Natural killer cell (primary cell): ENCODE measurements at regions of chr7 and their contacts with region 1.

Region 1: DNA sequence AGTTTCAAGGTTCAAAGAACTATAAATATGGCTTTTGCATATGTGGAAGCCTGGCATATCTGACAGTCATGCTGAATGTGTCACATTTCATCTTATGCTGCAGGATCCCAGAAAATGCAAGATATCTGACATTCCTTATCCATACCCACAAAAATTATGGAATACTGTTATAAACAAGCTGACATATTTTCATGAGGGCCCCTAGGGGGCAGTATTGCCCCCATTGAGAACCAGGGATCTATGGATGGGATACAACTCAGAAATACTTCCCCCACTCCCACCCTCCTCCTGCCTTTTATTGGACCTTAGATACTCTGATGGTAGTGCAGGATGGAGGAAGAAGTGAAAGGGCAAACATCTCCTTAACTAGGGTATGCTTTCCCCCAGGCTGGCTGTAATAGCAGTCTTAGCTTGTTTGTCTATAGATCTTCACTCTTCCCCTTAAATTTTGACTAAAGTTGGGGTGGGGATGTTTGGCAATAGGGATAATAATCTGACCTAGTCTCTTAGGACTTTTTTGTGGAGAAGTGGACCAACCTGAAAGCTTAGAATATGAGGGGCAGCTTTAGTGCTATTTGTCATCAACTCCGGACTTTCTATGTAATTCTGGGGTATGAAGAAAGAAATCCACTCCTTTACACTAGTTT is 3.5 kb upstream of the GNGT1 start:
- DNase-seq: peak in 1 of 2 donors; percentile 24
- ATAC-seq: peak in 1 of 3 donors; percentile 50
- H3K4me3 ChIP-seq: no peak overlapping the region
- H3K4me3 Mint-ChIP-seq: no peak overlapping the region
- H3K27ac ChIP-seq: no peak overlapping the region
- H3K27ac Mint-ChIP-seq: no peak overlapping the region
- H3K4me1 ChIP-seq: no peaks in the 10 kb centered on the region
- H3K4me1 Mint-ChIP-seq: no peaks in the 10 kb centered on the region
- H3K27me3 ChIP-seq: no peaks in the 10 kb centered on the region
- H3K27me3 Mint-ChIP-seq: peaks cover 19 to 64% of the 10 kb centered on the region in 2 donors
- CTCF ChIP-seq: peak; percentile 75

Region 2: DNA sequence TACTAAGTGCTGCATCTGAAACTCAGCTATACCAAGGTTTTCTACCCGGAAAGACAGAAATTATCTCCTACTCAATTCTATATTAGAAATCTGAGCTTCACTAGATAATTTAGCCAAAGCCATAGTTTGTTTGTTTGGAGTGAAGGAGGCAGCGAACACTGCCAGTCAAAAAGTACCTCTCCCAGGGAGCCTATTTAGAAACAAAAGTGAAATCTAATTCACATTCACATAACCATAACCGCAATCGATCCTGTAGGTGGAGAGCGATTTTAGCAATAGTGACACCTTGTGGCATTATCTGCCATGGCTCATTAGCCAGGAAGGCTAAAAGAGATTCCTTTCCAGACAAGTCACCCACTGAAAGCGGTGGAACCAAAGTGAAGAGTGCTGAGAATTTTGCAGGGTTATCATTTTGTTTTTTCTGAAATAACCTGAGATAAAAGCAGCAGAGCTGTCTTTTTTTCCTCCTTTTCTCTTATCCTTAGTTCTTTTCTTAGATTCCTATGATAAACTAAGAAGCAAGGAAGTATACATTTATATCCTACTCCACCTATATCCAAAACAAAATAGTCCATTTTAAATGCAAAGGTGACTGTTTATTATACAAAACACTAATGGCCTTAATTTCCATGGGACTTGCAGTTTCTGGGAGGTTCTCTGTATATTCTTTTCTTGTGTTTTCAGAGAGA is 184.9 kb after region 1 on chr7:
- intact Hi-C with region 1: loop called (anchors 1 kb)
- DNase-seq: peak in 1 of 2 donors; percentile 76
- ATAC-seq: peak; percentile 64 to 96 (median 82)
- H3K4me3 ChIP-seq: no peak overlapping the region
- H3K4me3 Mint-ChIP-seq: peak overlapping the region; percentile 53
- H3K27ac ChIP-seq: no peak overlapping the region
- H3K27ac Mint-ChIP-seq: no peak overlapping the region
- H3K4me1 ChIP-seq: no peaks in the 10 kb centered on the region
- H3K4me1 Mint-ChIP-seq: peaks cover 6 to 10% of the 10 kb centered on the region in 2 donors
- H3K27me3 ChIP-seq: no peaks in the 10 kb centered on the region
- H3K27me3 Mint-ChIP-seq: peaks cover 43 to 69% of the 10 kb centered on the region in 2 donors
- CTCF ChIP-seq: peak; percentile 72

Region 3: GRCh38 chr7:94436018-94436604 is 533.2 kb after region 1 on chr7:
- intact Hi-C with region 1: loop called (anchors 5 kb)
- DNase-seq: peak in 1 of 2 donors; percentile 74
- ATAC-seq: peak; percentile 57 to 87 (median 77)
- H3K4me3 ChIP-seq: no peak overlapping the region
- H3K4me3 Mint-ChIP-seq: no peak overlapping the region
- H3K27ac ChIP-seq: no peak overlapping the region
- H3K27ac Mint-ChIP-seq: no peak overlapping the region
- H3K4me1 ChIP-seq: no peaks in the 10 kb centered on the region
- H3K4me1 Mint-ChIP-seq: peaks cover 0 to 5% of the 10 kb centered on the region in 2 donors
- H3K27me3 ChIP-seq: peaks cover 4% of the 10 kb centered on the region
- H3K27me3 Mint-ChIP-seq: peaks cover 17 to 22% of the 10 kb centered on the region in 2 donors
- CTCF ChIP-seq: peak; percentile 85